H1 (cell line): ENCODE measurements at regions of chr14 and their contacts with region 1.

Region 1: GRCh38 chr14:22570132-22570949 is 18.7 kb downstream of the DAD1 start:
- DNase-seq: peak; percentile 78 to 79
- H3K4me3 ChIP-seq: peak overlapping the region in 1 of 4 experiments; percentile 26; a peak in 1 of 8 replicates
- H3K27ac ChIP-seq: peak overlapping the region; percentile 66
- H3K4me1 ChIP-seq: peaks cover 0 to 5% (median 1%) of the 10 kb centered on the region in 4 experiments; a peak in 3 of 7 replicates
- H3K27me3 ChIP-seq: no peaks in the 10 kb centered on the region
- CTCF ChIP-seq: peak; percentile 63 to 100 (median 97)
- EP300 ChIP-seq: peak in 1 of 2 experiments; percentile 73; a peak in 1 of 3 replicates
- POLR2A ChIP-seq: no peak
- RAD21 ChIP-seq: peak; percentile 83 to 89

Region 2: GRCh38 chr14:22341049-22341448 is 229.3 kb before region 1 on chr14:
- CTCF ChIA-PET with region 1: no interaction called
- POLR2A ChIA-PET with region 1: no interaction called
- DNase-seq: no peak
- H3K4me3 ChIP-seq: no peak overlapping the region
- H3K27ac ChIP-seq: no peak overlapping the region
- H3K4me1 ChIP-seq: no peaks in the 10 kb centered on the region
- H3K27me3 ChIP-seq: no peaks in the 10 kb centered on the region
- CTCF ChIP-seq: no peak
- EP300 ChIP-seq: no peak
- POLR2A ChIP-seq: no peak
- RAD21 ChIP-seq: no peak

Region 3: DNA sequence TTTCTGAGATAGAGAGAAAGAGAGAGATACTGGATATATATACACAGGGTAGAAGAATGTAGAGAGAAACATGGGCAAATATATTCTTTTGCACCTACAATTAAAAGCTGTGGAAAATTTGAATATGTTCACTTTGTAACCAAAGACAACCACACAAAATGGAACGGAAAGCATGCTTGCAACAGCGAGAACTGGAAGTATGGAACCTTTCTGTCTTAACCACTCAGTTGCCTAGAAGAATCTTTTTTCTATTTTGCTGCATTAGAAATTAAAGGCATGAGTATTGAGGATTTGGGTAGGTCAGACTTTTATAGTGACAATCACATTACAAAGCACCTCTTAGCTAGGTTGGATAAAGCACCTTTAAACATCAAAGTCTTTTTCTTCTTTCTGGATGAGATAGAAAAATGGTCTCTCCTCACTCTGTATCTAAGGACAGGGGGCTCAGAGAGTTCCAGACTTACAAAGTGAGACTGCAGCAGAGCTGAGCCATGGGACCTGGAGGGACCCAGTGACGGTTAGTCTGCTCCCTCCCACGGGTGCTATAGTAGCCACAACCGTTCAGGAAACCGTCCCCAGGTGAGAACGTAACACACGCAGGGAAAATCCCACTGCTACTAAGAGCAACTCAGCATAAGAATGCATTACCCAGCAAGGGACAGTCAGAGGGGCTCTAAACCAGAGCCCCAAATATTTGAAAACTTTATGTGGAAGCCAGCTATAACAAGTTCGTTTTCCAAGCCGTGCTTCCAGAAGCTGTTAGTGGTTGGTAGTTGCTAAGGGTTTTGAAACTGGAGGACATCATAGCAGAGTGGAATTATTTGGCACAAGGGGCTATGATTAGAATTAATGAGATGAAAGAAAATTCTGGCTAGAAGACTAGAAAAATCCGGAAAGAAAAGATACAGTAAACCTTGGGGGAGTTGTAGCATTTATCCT is 78.4 kb before region 1 on chr14:
- CTCF ChIA-PET with region 1: interaction called, 13 read pairs
- POLR2A ChIA-PET with region 1: interaction called, 3 read pairs
- DNase-seq: no peak
- H3K4me3 ChIP-seq: no peak overlapping the region
- H3K27ac ChIP-seq: no peak overlapping the region
- H3K4me1 ChIP-seq: peaks cover 0 to 7% (median 0%) of the 10 kb centered on the region in 4 experiments; a peak in 1 of 7 replicates
- H3K27me3 ChIP-seq: no peaks in the 10 kb centered on the region
- CTCF ChIP-seq: no peak
- EP300 ChIP-seq: no peak
- POLR2A ChIP-seq: no peak
- RAD21 ChIP-seq: no peak

Region 4: GRCh38 chr14:22556990-22557623 is 13.2 kb before region 1 on chr14:
- CTCF ChIA-PET with region 1: interaction called, 68 read pairs
- POLR2A ChIA-PET with region 1: interaction called, 13 read pairs
- DNase-seq: peak; percentile 51 to 97
- H3K4me3 ChIP-seq: peak overlapping the region in 2 of 4 experiments; percentile 30 to 51; a peak in 3 of 8 replicates
- H3K27ac ChIP-seq: peak overlapping the region; percentile 37; the same call in 1 of the 2 replicates
- H3K4me1 ChIP-seq: peaks cover 2 to 10% (median 6%) of the 10 kb centered on the region in 4 experiments; a peak in 6 of 7 replicates
- H3K27me3 ChIP-seq: no peaks in the 10 kb centered on the region
- CTCF ChIP-seq: peak; percentile 72 to 80 (median 78)
- EP300 ChIP-seq: no peak
- POLR2A ChIP-seq: no peak
- RAD21 ChIP-seq: peak; percentile 78 to 80

Region 5: DNA sequence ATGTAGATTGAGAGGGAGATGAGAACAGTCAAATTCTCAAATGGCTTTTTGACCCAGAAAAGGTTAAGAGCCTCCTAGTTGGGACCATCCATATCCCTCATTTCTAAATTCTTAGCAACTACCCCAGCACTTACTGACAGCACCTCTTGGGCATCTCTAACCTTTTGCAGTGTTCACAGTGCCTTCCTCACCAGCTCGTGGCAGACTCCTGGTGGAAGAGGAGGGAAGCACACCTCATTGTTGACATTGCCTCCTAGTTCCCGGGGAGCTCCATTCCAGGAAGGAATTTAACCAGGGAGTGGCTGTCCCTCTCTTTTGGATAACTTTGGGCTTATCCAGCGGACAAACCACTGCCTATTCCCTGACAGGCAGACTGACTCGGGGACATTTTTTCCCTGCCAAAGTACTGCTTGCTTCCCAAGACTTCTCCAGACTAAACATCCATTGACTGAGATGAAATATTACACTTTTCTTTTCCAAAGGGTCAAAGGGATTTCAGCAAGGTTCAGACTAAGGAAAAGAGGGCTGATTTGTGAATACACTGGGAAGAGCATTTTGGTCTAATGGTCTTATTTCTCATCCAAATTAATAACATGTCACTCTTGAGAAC is 82.8 kb after region 1 on chr14:
- CTCF ChIA-PET with region 1: interaction called, 78 read pairs
- POLR2A ChIA-PET with region 1: interaction called, 4 read pairs
- DNase-seq: peak; percentile 62 to 84
- H3K4me3 ChIP-seq: no peak overlapping the region
- H3K27ac ChIP-seq: no peak overlapping the region
- H3K4me1 ChIP-seq: no peaks in the 10 kb centered on the region
- H3K27me3 ChIP-seq: 0 out of 7 replicates have a peak, but pooled peaks cover 0 to 2% (median 0%) of the 10 kb centered on the region in 4 experiments
- CTCF ChIP-seq: peak; percentile 87 to 94 (median 89)
- EP300 ChIP-seq: no peak
- POLR2A ChIP-seq: no peak
- RAD21 ChIP-seq: peak; percentile 87

Region 6: GRCh38 chr14:22715186-22715812 is 145.0 kb after region 1 on chr14:
- CTCF ChIA-PET with region 1: no interaction called
- POLR2A ChIA-PET with region 1: no interaction called
- DNase-seq: peak in 1 of 2 experiments; percentile 49
- H3K4me3 ChIP-seq: no peak overlapping the region
- H3K27ac ChIP-seq: no peak overlapping the region
- H3K4me1 ChIP-seq: no peaks in the 10 kb centered on the region
- H3K27me3 ChIP-seq: no peaks in the 10 kb centered on the region
- CTCF ChIP-seq: no peak
- EP300 ChIP-seq: no peak
- POLR2A ChIP-seq: no peak
- RAD21 ChIP-seq: no peak

Region 7: DNA sequence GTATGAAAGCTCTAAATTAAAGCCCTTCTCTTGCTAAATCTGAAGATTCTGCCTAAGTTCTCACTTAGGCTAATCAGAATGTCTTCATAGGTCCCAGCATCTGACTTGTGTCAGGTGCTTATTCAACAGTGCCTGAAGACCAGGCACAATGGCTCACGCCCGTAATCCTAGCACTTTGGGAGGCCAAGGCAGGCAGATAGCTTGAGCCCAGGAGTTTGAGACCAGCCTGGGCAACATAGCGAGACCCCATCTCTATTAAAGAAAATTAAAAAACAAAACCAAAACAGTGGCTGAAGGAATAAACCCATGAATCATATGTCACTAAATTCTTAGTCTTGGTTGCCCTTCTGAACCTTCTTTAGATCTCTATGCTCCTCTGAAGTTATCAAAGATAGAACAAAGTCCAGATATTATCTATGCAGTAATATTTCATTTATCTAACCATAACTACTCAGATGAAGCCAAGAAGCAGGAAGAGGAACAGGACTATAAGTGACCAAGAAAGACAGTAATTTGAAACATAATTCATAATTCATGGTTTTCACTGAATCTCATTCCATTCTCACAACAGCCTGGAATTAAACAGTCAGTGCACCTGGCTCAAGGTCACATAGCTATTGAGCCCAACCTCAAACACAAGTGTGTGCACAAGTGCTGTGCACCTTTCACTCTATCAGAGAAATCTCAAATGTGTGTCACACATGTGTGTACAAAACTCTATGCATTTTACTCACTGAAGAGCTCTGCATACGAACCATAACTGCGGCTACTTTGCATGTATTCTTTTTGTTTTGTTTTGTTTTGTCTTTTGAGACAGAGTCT is 238.3 kb after region 1 on chr14:
- CTCF ChIA-PET with region 1: interaction called, 14 read pairs
- POLR2A ChIA-PET with region 1: no interaction called
- DNase-seq: no peak
- H3K4me3 ChIP-seq: no peak overlapping the region
- H3K27ac ChIP-seq: no peak overlapping the region
- H3K4me1 ChIP-seq: peaks cover 5 to 9% (median 7%) of the 10 kb centered on the region in 4 experiments; a peak in 6 of 7 replicates
- H3K27me3 ChIP-seq: no peaks in the 10 kb centered on the region
- CTCF ChIP-seq: no peak
- EP300 ChIP-seq: no peak
- POLR2A ChIP-seq: no peak
- RAD21 ChIP-seq: no peak

Region 8: DNA sequence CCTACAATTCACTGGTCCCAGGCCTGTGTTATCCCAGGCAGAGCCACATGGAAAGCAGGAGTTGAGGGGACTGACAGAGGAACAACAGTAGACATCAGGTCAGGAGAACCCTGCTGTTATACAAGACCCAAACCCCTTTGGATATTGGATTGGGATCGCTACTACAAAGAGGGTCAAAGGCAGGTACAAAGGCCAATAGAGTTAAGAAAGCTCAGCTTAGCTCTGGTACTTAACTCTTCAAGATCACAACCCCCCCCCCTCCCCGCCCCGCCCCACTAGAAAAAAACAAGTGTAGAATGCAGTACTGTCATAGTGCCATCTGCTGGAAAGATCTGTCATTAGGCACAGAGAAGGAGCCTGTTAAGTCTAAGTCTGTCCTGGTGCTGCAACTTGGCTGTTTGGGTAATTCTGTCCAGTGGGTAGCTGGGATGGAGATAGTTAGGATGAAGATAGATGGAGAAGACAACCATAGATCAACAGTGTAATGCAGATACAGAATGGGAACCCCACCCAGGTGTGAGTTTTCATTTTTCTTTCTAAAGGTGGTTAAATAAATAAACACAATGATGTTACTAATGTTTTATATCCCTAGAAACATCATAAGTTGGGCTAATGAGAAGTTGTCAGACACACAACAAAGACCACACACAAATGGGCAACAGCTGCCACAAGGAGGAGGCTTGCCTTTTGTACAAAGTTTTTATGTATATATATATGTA is 329.9 kb after region 1 on chr14:
- CTCF ChIA-PET with region 1: interaction called, 11 read pairs
- POLR2A ChIA-PET with region 1: no interaction called
- DNase-seq: peak in 1 of 2 experiments; percentile 58
- H3K4me3 ChIP-seq: 0 out of 8 replicates have a peak overlapping the region, but pooled peaks of 1 of the 4 experiments have one; percentile 13
- H3K27ac ChIP-seq: no peak overlapping the region
- H3K4me1 ChIP-seq: peaks cover 0 to 8% (median 4%) of the 10 kb centered on the region in 4 experiments; a peak in 2 of 7 replicates
- H3K27me3 ChIP-seq: peaks cover 10 to 35% (median 28%) of the 10 kb centered on the region in 4 experiments
- CTCF ChIP-seq: peak; percentile 1 to 75 (median 64)
- EP300 ChIP-seq: no peak
- POLR2A ChIP-seq: no peak
- RAD21 ChIP-seq: peak; percentile 64 to 75